Endothelial cell of umbilical vein (primary cell): ENCODE measurements at regions of chr9 and their contacts with region 1.

Region 1: DNA sequence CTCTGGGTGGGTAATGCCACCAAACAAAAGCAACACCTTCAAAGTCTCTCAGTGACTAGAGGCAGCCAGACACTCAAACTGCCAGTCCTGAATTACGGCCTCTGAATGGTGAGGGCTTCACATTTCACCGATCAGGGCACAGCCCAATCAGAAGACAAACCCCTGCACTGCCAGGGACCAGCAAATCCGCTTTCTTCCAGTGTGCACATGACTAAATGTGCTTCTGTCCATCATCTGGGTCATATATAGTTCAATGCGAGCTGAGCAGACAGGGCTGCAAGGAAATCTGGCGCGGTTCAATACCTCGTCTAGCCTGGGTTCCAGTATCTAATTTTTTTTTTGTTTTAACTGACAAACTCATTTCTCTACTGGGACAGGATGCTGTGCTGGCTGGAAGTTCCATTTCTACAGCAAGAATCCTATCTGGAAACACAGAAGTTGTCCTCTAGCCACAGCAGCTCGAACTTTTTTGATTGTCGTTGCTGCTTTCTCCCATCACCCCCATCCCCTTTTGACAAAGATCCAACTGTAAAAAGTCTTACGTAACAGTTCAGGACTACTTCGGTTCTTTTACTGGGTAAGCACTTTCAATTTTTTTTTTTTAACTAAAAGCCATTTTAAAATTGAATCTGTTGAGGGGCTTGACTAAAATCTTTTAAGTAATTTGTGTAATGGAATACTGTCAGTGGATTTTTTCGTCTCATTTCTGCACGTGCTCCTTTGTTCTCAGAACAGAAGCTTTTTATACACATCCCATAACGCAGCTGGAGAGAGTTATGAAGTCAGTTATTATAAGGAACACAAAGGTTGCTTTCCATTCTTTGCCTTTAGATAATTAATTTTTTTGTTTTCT is 112.7 kb downstream of the NR6A1 start:
- DNase-seq: peak; percentile 95
- H3K4me3 ChIP-seq: peak overlapping the region; percentile 53 to 100 (median 99)
- H3K27ac ChIP-seq: peak overlapping the region; percentile 98
- H3K4me1 ChIP-seq: peaks cover 33% of the 10 kb centered on the region
- H3K27me3 ChIP-seq: no peaks in the 10 kb centered on the region
- CTCF ChIP-seq: no peak
- POLR2A ChIP-seq: peak; percentile 99

Region 2: DNA sequence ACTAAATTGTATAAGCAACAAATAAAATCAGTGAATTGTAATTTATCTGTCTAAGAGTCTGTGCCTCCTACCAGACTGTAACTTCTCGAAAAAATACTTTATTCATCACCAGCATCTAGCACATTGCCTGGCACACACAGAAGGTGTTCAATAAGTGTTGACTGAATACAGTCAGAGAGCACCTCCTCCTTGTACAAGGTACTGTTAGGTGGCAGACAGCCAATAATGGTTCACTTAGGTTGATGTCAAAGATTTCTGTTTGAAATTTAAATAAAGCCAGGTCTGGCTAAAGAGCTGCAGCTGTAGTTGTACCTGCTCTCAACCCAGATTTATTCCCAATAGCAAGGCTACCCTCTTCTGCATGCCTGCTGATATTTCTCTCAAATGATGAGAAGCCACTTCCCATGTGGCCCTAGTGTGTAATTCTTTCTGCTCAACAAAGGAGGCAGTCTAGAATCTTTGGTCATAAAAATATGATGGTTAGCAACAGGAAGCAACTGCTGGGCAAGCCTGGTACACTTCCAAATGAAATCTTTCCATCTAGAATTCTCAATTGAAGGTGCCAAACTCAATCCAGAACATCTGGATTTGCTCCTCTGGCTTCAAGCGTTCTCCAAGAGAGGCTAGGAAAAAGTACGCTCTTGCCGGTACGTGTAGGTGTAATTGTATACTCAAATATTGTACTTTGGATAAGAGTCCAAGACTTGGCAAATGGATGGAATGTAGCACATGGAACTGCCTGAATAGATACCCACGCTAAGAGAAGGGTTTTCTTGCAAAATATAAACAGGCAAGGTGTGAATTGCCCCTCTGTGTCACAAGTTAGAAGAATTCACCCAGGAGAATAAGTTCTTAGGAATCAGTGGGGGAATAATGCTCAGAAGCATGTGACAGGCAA is 17.1 kb after region 1 on chr9:
- CTCF ChIA-PET with region 1: interaction called, 5 read pairs
- POLR2A ChIA-PET with region 1: interaction called, 3 read pairs
- dilution Hi-C with region 1: no loop called
- intact Hi-C with region 1: loop called (anchors 1 kb)
- DNase-seq: no peak
- H3K4me3 ChIP-seq: no peak overlapping the region
- H3K27ac ChIP-seq: no peak overlapping the region
- H3K4me1 ChIP-seq: peaks cover 16% of the 10 kb centered on the region
- H3K27me3 ChIP-seq: no peaks in the 10 kb centered on the region
- CTCF ChIP-seq: no peak
- POLR2A ChIP-seq: no peak

Region 3: GRCh38 chr9:124697326-124698200 is 39.2 kb after region 1 on chr9:
- CTCF ChIA-PET with region 1: no interaction called
- POLR2A ChIA-PET with region 1: no interaction called
- dilution Hi-C with region 1: no loop called
- intact Hi-C with region 1: loop called (anchors 2 kb)
- DNase-seq: peak; percentile 44
- H3K4me3 ChIP-seq: no peak overlapping the region
- H3K27ac ChIP-seq: peak overlapping the region; percentile 47
- H3K4me1 ChIP-seq: peaks cover 19% of the 10 kb centered on the region
- H3K27me3 ChIP-seq: no peaks in the 10 kb centered on the region
- CTCF ChIP-seq: no peak
- POLR2A ChIP-seq: no peak

Region 4: DNA sequence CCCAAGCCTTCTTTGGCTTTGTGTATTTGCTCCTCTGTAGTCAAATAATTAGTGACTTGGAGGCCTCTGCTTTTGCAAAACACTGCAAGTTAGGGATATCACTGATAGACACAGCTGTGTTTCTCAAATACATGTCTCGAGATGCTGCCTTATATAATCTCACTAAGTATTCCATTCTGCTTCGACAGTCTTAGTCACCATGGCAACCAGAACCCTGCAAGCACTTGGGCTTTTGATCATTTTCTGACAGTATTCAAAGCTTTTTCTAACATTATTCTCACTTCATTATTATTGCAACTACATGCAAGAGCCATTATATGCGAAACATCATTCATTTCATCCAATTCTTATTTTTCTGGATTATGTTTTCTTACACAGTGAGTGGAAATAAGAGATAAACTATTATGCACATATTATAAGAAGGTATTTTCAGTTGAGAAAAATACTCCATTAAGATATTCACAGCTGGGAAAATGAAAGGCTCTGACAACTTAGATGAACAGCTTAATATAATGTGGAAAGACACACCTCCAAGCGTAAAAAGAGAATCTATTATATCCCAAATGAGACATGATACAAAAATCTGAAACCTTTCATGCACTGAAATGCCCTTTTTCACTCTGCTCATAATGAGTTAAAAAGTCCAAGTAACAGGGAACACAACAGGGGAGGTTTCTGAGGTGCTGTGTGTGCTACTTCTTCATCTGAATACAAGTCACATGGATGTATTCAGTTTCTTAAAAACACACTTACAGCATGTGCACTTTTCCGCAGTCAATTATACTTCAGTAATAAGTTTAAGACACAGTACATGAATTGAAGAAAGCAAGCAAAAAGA is 391.0 kb after region 1 on chr9:
- CTCF ChIA-PET with region 1: no interaction called
- POLR2A ChIA-PET with region 1: no interaction called
- dilution Hi-C with region 1: no loop called
- intact Hi-C with region 1: no loop called
- DNase-seq: no peak
- H3K4me3 ChIP-seq: no peak overlapping the region
- H3K27ac ChIP-seq: no peak overlapping the region
- H3K4me1 ChIP-seq: no peaks in the 10 kb centered on the region
- H3K27me3 ChIP-seq: no peaks in the 10 kb centered on the region
- CTCF ChIP-seq: no peak
- POLR2A ChIP-seq: no peak

Region 5: GRCh38 chr9:125137200-125137599 is 478.8 kb after region 1 on chr9:
- CTCF ChIA-PET with region 1: no interaction called
- POLR2A ChIA-PET with region 1: no interaction called
- dilution Hi-C with region 1: no loop called
- intact Hi-C with region 1: no loop called
- DNase-seq: no peak
- H3K4me3 ChIP-seq: no peak overlapping the region
- H3K27ac ChIP-seq: no peak overlapping the region
- H3K4me1 ChIP-seq: no peaks in the 10 kb centered on the region
- H3K27me3 ChIP-seq: no peaks in the 10 kb centered on the region
- CTCF ChIP-seq: no peak
- POLR2A ChIP-seq: no peak